Activated CD8-positive, alpha-beta T cell treated with anti-CD3 and anti-CD28 coated beads for 36 hours (primary cell): ENCODE measurements at regions of chr10 and their contacts with region 1.

Region 1: GRCh38 chr10:15168781-15169554 is 475 bp upstream of the NMT2 start:
- DNase-seq: peak; percentile 98
- ATAC-seq: peak; percentile 90
- H3K4me3 Mint-ChIP-seq: peak overlapping the region; percentile 57
- H3K27ac Mint-ChIP-seq: peak overlapping the region; percentile 77
- H3K4me1 Mint-ChIP-seq: peaks cover 43% of the 10 kb centered on the region
- H3K27me3 Mint-ChIP-seq: no peaks in the 10 kb centered on the region
- CTCF ChIP-seq: no peak

Region 2: GRCh38 chr10:15097011-15097812 is 71.8 kb before region 1 on chr10 and contains the start of gene RPP38:
- CTCF ChIA-PET with region 1: interaction called, 12 read pairs
- POLR2A ChIA-PET with region 1: interaction called, 3 read pairs
- intact Hi-C with region 1: no loop called
- DNase-seq: peak; percentile 96
- ATAC-seq: peak; percentile 94
- H3K4me3 Mint-ChIP-seq: peak within 1 kb of the TSS; percentile 95
- H3K27ac Mint-ChIP-seq: peak within 1 kb of the TSS; percentile 97
- H3K4me1 Mint-ChIP-seq: peaks cover 27% of the 10 kb centered on the region
- H3K27me3 Mint-ChIP-seq: no peaks in the 10 kb centered on the region
- CTCF ChIP-seq: no peak
- total RNA-seq, gene RPP38: 16.2 to 24.2 TPM

Region 3: DNA sequence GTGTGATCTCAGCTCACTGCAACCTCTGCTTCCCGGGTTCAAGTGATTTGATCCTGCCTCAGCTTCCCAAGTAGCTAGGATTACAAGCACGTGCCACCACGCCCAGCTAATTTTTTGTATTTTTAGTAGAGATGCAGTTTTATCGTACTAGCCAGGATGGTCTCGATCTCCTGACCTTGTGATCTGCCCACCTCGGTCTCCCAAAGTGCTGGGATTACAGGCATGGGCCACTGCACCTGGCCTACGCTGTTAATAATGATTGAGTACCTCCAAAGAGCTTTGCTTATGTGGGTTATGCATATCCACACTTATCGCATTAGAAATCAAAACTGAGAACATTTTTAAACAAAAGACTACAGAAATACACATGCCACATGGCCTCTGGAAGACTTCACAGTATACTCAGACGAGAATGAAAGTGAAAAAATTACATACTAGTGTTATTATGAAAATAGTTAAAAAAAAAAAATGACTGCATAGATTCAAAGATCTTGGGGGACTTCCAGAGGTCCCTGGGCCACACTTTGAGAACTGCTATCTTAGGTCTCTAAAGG is 46.4 kb before region 1 on chr10:
- CTCF ChIA-PET with region 1: interaction called, 11 read pairs
- POLR2A ChIA-PET with region 1: no interaction called
- intact Hi-C with region 1: no loop called
- DNase-seq: peak; percentile 41
- ATAC-seq: peak; percentile 81
- H3K4me3 Mint-ChIP-seq: peak overlapping the region; percentile 26
- H3K27ac Mint-ChIP-seq: peak overlapping the region; percentile 87
- H3K4me1 Mint-ChIP-seq: peaks cover 28% of the 10 kb centered on the region
- H3K27me3 Mint-ChIP-seq: no peaks in the 10 kb centered on the region
- CTCF ChIP-seq: no peak

Region 4: DNA sequence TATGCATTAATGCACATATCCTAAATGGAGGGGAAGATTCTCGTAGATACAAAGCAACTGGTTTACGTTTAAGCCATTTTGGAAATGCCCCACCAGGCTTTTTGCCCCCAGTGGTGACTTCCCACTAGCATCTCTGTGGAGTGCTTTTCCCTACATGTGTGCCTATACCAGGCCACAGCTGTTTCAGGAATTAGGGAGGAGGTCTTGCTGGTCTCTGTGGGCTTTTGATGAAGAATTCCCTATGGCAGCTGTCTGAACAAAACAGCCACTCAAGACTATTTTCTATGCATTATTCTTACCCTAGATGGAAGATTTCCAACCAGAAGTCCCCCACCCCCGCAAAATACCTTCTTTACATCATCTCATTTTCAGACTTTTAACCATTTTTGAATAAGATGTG is 51.5 kb after region 1 on chr10:
- CTCF ChIA-PET with region 1: no interaction called
- POLR2A ChIA-PET with region 1: no interaction called
- intact Hi-C with region 1: no loop called
- DNase-seq: no peak
- ATAC-seq: no peak
- H3K4me3 Mint-ChIP-seq: no peak overlapping the region
- H3K27ac Mint-ChIP-seq: no peak overlapping the region
- H3K4me1 Mint-ChIP-seq: no peaks in the 10 kb centered on the region
- H3K27me3 Mint-ChIP-seq: no peaks in the 10 kb centered on the region
- CTCF ChIP-seq: no peak

Region 5: DNA sequence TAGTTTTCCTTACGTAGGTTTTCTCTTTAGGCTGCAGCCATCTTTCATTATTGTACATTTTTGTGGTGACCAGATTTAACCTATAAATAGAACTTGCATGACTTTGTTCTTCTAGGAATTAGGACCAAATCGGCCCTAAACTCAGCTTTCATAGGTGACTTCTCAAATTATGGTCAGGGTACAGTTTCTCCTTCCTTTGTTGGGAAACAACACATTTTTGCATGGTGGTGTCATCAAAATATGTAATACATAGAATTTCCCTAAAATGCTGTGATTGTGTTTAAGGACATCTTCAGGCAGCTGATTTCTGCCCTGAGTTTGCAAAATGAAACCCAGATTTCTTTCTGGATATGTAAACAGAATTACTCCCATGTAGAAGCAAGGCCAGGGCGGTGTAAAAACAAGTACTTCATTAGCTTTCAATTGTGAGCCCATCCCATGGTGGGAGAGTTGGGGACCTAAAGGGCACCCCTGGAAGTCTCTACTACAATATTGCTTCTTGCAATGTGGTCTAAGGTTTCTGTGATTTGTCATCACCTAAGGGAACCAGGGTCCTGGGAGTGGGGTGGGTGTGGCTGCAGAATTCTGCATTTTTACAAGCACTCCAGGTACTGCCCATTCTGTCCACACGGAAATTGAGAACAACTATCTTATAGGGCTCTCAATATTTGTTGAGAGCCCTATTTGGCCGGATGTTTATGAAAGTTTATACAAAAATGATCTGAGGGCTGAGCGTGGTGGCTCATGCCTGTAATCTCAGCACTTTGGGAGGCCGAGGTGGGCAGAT is 323.1 kb after region 1 on chr10:
- CTCF ChIA-PET with region 1: no interaction called
- POLR2A ChIA-PET with region 1: no interaction called
- intact Hi-C with region 1: no loop called
- DNase-seq: no peak
- ATAC-seq: no peak
- H3K4me3 Mint-ChIP-seq: no peak overlapping the region
- H3K27ac Mint-ChIP-seq: no peak overlapping the region
- H3K4me1 Mint-ChIP-seq: no peaks in the 10 kb centered on the region
- H3K27me3 Mint-ChIP-seq: peaks cover 15% of the 10 kb centered on the region
- CTCF ChIP-seq: no peak